ENCODE measurements at regions of chr3 and their contacts with region 1.

Region 1: GRCh38 chr3:1082108-1082507 is 10.7 kb upstream of the CNTN6 start:
- DNase-seq: peak in 8 of 10 donors; percentile 23 to 86 (median 48)

Region 2: GRCh38 chr3:354432-354831 is 727.7 kb before region 1 on chr3:
- intact Hi-C with region 1: no loop called
- DNase-seq: peak in 4 of 10 donors; percentile 18 to 52 (median 32)

Region 3: GRCh38 chr3:3015185-3016089 is 1933.3 kb after region 1 on chr3:
- intact Hi-C with region 1: loop called (anchors 5 kb)
- DNase-seq: no peak